ENCODE measurements at regions of chr6 and their contacts with region 1.

Region 1: GRCh38 chr6:116287689-116288282 is 8.1 kb upstream of the TSPYL1 start:
- DNase-seq: no peak
- H3K4me3 ChIP-seq: no peak overlapping the region
- H3K27ac ChIP-seq: no peak overlapping the region
- H3K4me1 ChIP-seq: peaks cover 0 to 2% (median 0%) of the 10 kb centered on the region in 4 experiments; a peak in 1 of 7 replicates
- H3K27me3 ChIP-seq: no peaks in the 10 kb centered on the region
- CTCF ChIP-seq: peak in 2 of 3 experiments; percentile 65 to 79; a peak in 2 of 4 replicates
- EP300 ChIP-seq: no peak
- POLR2A ChIP-seq: no peak
- RAD21 ChIP-seq: peak; percentile 89 to 92

Region 2: DNA sequence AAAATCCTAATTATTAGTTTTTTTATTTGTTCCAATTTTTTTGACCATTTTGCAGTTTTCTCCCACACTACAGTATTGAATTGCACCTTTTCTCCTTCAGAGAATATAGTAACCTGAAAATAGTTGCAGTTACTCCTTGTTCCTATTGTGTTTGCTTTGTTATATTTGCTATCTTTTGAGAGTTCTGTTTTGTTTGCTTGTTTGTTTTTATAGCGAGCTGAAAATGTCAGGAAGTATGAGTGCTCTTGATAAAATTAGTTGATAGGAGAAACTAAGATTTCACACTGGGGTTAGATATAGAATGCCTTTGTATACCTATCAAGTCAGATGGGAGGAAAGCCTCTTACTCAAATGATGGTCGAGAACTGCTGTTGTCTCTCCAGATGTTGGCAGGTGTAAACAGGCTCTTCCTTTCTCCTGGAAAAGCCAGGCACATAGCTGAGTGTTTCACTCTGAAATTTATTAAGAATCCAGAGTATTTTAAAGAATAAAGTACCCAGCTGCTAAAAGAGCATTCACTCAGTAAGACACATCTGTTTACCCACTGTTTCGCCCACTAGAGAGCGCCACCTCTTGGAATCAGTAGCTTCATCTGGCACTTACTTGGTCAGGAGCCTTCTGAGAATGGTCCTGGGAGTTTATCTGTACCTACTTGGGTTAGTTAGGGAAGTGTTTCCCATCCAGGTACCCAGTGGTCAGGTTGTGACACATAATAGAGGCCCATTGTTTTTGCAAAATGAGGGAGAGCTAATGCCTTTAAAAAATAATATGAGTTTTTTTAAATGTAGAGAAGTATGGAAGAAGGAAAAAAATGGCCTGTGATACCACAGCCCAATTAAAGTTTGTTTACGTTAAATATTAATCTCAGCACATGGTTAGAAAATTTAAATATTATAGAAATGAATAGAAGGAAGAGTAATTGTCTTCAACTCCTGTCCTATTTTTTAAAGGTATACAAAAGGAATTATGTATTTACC is 175.9 kb before region 1 on chr6:
- CTCF ChIA-PET with region 1: no interaction called
- POLR2A ChIA-PET with region 1: no interaction called
- DNase-seq: peak in 1 of 2 experiments; percentile 62
- H3K4me3 ChIP-seq: no peak overlapping the region
- H3K27ac ChIP-seq: no peak overlapping the region
- H3K4me1 ChIP-seq: peaks cover 0 to 6% (median 3%) of the 10 kb centered on the region in 4 experiments; a peak in 3 of 7 replicates
- H3K27me3 ChIP-seq: no peaks in the 10 kb centered on the region
- CTCF ChIP-seq: peak; percentile 19 to 81 (median 64)
- EP300 ChIP-seq: no peak
- POLR2A ChIP-seq: no peak
- RAD21 ChIP-seq: peak; percentile 52 to 70

Region 3: DNA sequence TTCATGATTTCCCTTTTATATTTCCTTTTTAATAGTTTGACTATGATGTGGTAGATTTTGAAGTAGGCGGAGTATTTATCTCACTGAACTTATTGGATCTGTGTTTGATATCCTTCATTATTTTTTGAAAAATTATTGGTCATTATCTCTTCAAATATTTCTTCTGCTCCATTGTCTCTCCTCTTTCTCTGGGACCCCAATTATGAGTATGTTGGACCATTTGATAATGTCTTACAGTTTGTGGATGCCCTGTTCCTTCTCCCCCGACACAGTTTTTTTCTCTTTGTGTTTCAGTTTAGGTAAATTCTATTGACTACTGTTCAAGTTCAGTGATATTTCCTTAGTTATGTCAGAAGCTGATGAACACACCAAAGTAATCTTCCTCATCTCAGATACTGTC is 112.4 kb before region 1 on chr6:
- CTCF ChIA-PET with region 1: no interaction called
- POLR2A ChIA-PET with region 1: no interaction called
- DNase-seq: no peak
- H3K4me3 ChIP-seq: no peak overlapping the region
- H3K27ac ChIP-seq: no peak overlapping the region
- H3K4me1 ChIP-seq: peaks cover 0 to 4% (median 0%) of the 10 kb centered on the region in 4 experiments; a peak in 1 of 7 replicates
- H3K27me3 ChIP-seq: no peaks in the 10 kb centered on the region
- CTCF ChIP-seq: no peak
- EP300 ChIP-seq: no peak
- POLR2A ChIP-seq: no peak
- RAD21 ChIP-seq: no peak

Region 4: DNA sequence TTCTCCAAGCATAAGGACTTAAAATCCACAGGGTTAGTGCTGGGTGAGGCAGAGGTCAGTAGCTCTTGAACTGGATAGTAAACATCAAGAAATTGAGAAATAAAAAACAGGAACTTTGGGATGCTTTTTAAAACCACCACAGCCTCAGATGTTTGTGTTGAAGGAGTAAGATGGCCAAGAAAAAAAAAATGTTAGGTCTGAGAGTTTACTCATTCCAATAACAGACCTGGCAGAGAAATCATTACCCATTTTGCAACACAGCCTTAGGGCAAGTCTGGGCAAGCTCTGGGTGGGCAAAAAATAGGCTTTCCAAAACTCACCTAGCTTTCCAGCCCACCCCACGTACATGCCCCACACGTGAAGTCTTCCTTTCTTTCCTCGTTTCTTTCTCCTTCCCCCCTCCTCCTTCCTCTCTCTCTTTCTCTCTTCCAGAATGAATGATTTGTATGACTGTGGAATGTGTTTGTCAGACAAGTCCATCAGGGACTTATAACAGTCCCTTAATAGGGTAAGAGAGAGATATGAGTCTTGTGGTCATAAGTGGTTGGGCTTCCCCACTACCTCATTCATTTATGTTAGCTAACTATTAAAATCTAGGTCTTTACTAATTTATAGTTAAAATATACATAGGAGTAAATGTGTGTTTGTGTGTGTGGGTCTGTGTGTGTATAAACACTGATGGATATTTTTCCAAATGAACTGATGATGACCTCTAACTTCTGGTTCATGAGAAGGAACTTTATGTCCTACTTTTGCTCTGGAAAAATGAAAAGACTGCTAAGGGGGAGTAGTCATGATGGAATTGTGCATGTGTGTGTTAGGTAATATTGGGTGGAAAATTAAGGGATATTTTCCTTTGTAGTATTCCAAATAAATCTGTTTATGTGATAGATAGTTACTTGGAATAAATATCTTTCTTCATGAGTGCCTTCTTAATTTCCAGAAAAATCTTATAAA is 65.0 kb after region 1 on chr6:
- CTCF ChIA-PET with region 1: interaction called, 17 read pairs
- POLR2A ChIA-PET with region 1: no interaction called
- DNase-seq: no peak
- H3K4me3 ChIP-seq: no peak overlapping the region
- H3K27ac ChIP-seq: no peak overlapping the region
- H3K4me1 ChIP-seq: peaks cover 0 to 7% (median 3%) of the 10 kb centered on the region in 4 experiments; a peak in 4 of 7 replicates
- H3K27me3 ChIP-seq: no peaks in the 10 kb centered on the region
- CTCF ChIP-seq: no peak
- EP300 ChIP-seq: no peak
- POLR2A ChIP-seq: no peak
- RAD21 ChIP-seq: no peak

Region 5: DNA sequence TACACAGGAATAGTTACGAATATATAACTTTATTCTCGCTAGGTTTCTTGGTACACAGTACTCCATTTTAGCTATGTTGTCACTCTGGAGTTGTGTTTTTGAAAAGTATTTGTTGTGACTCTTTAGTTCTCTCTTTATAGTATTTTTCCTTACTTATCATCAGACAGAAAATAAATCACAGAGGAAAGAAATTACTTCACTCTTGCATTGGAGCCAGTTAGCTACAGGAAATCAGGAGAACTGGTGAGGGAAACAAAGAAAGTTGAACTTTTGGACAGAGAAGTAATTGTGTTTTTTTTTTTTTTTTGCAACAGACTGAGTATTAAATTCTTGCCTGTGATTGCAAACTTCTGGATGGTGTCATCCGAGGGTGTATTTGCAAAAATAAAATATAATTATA is 116.9 kb after region 1 on chr6:
- CTCF ChIA-PET with region 1: interaction called, 11 read pairs
- POLR2A ChIA-PET with region 1: interaction called, 3 read pairs
- DNase-seq: no peak
- H3K4me3 ChIP-seq: no peak overlapping the region
- H3K27ac ChIP-seq: no peak overlapping the region
- H3K4me1 ChIP-seq: peaks cover 0 to 12% (median 6%) of the 10 kb centered on the region in 4 experiments; a peak in 4 of 7 replicates
- H3K27me3 ChIP-seq: no peaks in the 10 kb centered on the region
- CTCF ChIP-seq: no peak
- EP300 ChIP-seq: no peak
- POLR2A ChIP-seq: no peak
- RAD21 ChIP-seq: no peak

Region 6: GRCh38 chr6:116456927-116457326 is 169.1 kb after region 1 on chr6:
- CTCF ChIA-PET with region 1: interaction called, 14 read pairs
- POLR2A ChIA-PET with region 1: no interaction called
- DNase-seq: no peak
- H3K4me3 ChIP-seq: no peak overlapping the region
- H3K27ac ChIP-seq: no peak overlapping the region
- H3K4me1 ChIP-seq: peaks cover 0 to 3% (median under 1%) of the 10 kb centered on the region in 4 experiments; a peak in 4 of 7 replicates
- H3K27me3 ChIP-seq: peaks cover 5 to 17% (median 13%) of the 10 kb centered on the region in 4 experiments
- CTCF ChIP-seq: no peak
- EP300 ChIP-seq: no peak
- POLR2A ChIP-seq: no peak
- RAD21 ChIP-seq: no peak

Region 7: DNA sequence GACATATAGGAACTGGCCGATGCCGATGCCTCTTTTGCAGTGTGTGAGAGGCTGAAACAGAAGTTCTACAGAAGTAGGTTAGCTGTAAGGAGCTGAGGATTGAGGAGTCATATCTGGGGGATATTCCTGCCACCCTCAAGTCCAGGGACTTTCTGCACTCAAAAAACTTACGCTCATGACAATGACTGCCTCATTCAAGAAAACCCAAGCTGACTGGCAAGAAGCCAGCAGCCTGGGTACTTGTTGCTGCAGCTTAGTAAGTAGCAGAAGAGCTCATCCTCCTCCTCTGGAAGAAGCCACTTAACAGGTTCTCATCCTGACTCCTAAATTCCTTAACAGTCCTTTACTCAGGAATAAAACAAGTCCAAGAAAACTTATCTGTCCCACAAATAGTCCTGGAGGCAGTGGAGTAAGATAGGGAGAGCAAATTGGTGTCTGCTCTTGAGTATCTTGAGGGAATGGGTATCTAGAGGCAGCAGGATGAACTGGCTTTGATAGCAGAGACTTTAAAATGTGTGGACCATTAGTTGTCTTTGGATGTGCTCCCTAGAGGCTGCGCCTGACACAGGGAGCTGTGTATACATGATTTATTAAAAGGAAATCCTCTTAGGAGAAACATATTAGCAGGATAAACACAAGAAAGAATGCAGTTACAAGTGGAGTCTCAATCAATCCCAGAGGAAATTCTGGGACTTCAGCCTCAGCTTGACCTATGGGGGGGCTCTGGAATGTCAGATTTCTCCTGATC is 231.0 kb after region 1 on chr6:
- CTCF ChIA-PET with region 1: interaction called, 28 read pairs
- POLR2A ChIA-PET with region 1: no interaction called
- DNase-seq: no peak
- H3K4me3 ChIP-seq: no peak overlapping the region
- H3K27ac ChIP-seq: no peak overlapping the region
- H3K4me1 ChIP-seq: peaks cover 0 to 7% (median 0%) of the 10 kb centered on the region in 4 experiments; a peak in 1 of 7 replicates
- H3K27me3 ChIP-seq: peaks cover 0 to 1% (median 0%) of the 10 kb centered on the region in 4 experiments; a peak in 1 of 7 replicates
- CTCF ChIP-seq: no peak
- EP300 ChIP-seq: no peak
- POLR2A ChIP-seq: no peak
- RAD21 ChIP-seq: no peak

Region 8: DNA sequence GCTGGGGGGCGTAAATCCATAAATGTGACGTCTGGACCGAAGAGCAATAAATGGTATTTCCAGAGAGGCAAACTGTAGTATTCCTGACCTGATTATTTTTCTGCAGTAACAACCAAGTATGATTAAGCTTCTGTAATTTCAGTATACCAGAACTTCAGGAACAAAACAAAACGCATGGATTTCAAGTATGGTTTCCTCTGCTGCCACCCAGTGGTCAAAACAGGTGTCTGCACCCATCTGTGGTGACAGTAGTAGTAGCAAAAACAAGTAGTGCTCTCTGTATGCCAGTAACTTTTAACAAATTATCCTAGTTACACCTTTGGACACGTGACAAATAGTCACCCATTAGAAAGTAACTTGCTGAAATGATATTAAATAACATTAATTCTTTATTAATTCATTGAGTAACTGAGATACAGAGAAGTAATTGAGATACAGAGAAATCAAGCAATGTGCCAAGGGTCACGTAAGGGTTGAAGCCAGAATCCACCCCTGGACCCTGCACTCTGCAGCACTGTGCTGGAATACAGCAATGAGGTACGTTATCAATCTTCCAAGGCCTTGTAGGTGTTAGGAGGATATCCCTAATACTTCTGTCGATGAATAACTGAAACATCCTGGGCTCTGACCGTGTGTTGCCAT is 273.7 kb after region 1 on chr6:
- CTCF ChIA-PET with region 1: interaction called, 19 read pairs
- POLR2A ChIA-PET with region 1: no interaction called
- DNase-seq: peak in 1 of 2 experiments; percentile 83
- H3K4me3 ChIP-seq: no peak overlapping the region; a peak in 1 of 8 replicates
- H3K27ac ChIP-seq: no peak overlapping the region
- H3K4me1 ChIP-seq: no peaks in the 10 kb centered on the region
- H3K27me3 ChIP-seq: no peaks in the 10 kb centered on the region
- CTCF ChIP-seq: peak; percentile 38 to 88 (median 84)
- EP300 ChIP-seq: no peak
- POLR2A ChIP-seq: no peak
- RAD21 ChIP-seq: peak; percentile 87

Measured in H1 (cell line).